Heart left ventricle (tissue), 16 donors: ENCODE measurements at regions of chr4 and their contacts with region 1.

Region 1: GRCh38 chr4:53646795-53647194 is 55.5 kb upstream of the LNX1 start:
- DNase-seq: peak in 2 of 5 donors; percentile 18 to 32
- ATAC-seq: peak in 2 of 4 donors; percentile 11 to 64
- H3K4me3 ChIP-seq: no peak overlapping the region
- H3K27ac ChIP-seq: peak overlapping the region in 7 of 12 donors; percentile 10 to 52 (median 41)
- H3K4me1 ChIP-seq: peaks cover 0 to 31% (median 6%) of the 10 kb centered on the region in 12 donors
- H3K27me3 ChIP-seq: no peaks in the 10 kb centered on the region
- CTCF ChIP-seq: no peak
- POLR2A ChIP-seq: no peak

Region 2: DNA sequence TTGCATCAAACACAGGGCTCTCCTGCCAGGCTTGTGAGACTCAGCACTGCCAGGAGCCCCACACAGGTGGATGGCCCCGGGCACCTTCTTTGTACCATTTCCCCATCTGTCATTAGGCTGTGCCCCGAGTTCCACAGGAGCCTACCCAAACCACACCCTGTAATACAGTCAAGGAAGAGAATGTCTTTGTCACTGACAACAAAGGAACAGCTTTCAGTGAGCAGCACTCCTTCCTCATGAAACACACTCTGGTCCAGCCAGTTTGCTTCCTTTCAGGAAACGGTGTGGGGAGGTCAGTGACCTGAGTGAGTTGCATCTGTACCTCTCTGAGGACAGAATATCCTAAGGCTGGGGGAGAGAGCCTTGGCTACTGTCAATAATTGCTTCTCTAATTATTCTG is 109.2 kb before region 1 on chr4:
- intact Hi-C with region 1: loop called in 2 of 10 experiments (anchors 2 to 5 kb)
- DNase-seq: peak in 1 of 5 donors; percentile 32
- ATAC-seq: peak; percentile 12 to 64 (median 38)
- H3K4me3 ChIP-seq: no peak overlapping the region
- H3K27ac ChIP-seq: peak overlapping the region in 7 of 12 donors; percentile 2 to 77 (median 45)
- H3K4me1 ChIP-seq: peaks cover 0 to 37% (median 13%) of the 10 kb centered on the region in 12 donors
- H3K27me3 ChIP-seq: no peaks in the 10 kb centered on the region
- CTCF ChIP-seq: no peak
- POLR2A ChIP-seq: no peak